ENCODE measurements at regions of chr12 and their contacts with region 1.

Region 1: GRCh38 chr12:49740930-49741881 is at the start of gene TMBIM6:
- DNase-seq: peak; percentile 98 to 99
- ATAC-seq: peak; percentile 97 to 98 (median 98)
- H3K4me3 ChIP-seq: peak within 1 kb of the TSS; percentile 61 to 92 (median 69)
- H3K27ac ChIP-seq: peak within 1 kb of the TSS; percentile 90 to 99 (median 94)
- H3K4me1 ChIP-seq: peaks cover 10 to 45% (median 41%) of the 10 kb centered on the region in 9 donors
- H3K27me3 ChIP-seq: no peaks in the 10 kb centered on the region
- CTCF ChIP-seq: peak; percentile 91 to 100 (median 98)
- total RNA-seq, gene TMBIM6: 174 to 322 (median 202) TPM

Region 2: GRCh38 chr12:49763006-49763591 is 21.9 kb after region 1 on chr12:
- intact Hi-C with region 1: loop called in 1 of 10 experiments (anchors 2 kb)
- DNase-seq: peak; percentile 79
- ATAC-seq: peak; percentile 56 to 87 (median 80)
- H3K4me3 ChIP-seq: no peak overlapping the region
- H3K27ac ChIP-seq: peak overlapping the region in 9 of 10 donors; percentile 20 to 72 (median 46)
- H3K4me1 ChIP-seq: peaks cover 0 to 28% (median 9%) of the 10 kb centered on the region in 9 donors
- H3K27me3 ChIP-seq: no peaks in the 10 kb centered on the region
- CTCF ChIP-seq: peak; percentile 52 to 83 (median 79)

Region 3: GRCh38 chr12:49855005-49855404 is 113.8 kb after region 1 on chr12:
- intact Hi-C with region 1: no loop called
- DNase-seq: no peak
- ATAC-seq: no peak
- H3K4me3 ChIP-seq: no peak overlapping the region
- H3K27ac ChIP-seq: no peak overlapping the region
- H3K4me1 ChIP-seq: no peaks in the 10 kb centered on the region
- H3K27me3 ChIP-seq: peaks cover 0 to 18% (median 5%) of the 10 kb centered on the region in 7 donors
- CTCF ChIP-seq: no peak

Region 4: DNA sequence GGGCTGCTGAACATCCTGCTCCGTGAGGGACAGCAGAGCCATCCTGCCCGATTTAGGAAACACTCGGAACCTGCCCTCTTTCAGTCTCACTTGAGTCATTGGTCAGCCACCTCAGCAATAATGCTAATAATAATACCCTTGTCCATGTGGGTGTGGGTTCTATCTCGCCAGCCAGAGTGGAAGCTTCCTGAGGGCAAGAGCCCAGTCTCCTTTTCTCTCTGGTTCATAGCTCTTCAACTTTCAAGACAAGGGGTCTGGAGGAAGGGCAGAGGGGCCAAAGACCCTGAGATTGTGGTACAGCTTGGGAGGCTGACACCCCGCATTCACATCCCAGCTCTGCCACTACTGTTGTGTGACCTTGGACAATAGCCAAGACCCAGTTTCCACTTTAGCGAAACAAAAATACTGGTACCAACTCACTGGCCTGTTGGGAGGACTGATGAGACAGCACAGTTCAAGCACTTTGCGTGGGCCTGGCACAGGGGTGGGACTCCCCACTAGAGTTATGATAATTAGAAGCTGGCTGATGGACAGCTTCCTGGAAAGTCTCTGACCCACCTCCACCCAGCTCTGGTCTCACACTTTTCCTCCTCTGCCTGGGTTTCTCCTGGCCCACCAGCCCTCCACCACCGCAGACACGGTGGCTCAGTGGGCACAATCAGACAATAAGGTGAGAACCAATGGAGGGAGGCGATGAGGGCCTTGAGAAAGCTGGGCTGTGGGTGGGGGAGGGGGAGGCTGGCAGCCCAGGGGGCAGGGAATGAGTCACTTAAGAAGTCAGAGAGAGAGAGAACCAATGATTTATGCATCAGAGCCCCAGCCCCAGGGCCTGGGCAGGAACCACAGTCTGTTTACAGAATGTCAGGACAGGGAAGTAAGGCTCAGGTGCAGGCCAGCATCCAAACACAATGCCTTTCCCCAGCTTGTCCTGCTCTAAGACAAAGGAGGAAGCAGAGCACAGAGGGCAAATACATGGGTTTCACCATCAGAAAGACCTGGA is 152.8 kb after region 1 on chr12:
- intact Hi-C with region 1: no loop called
- DNase-seq: no peak
- ATAC-seq: no peak
- H3K4me3 ChIP-seq: no peak overlapping the region
- H3K27ac ChIP-seq: no peak overlapping the region
- H3K4me1 ChIP-seq: no peaks in the 10 kb centered on the region
- H3K27me3 ChIP-seq: peaks cover 0 to 16% (median 4%) of the 10 kb centered on the region in 7 donors
- CTCF ChIP-seq: no peak